ENCODE measurements at regions of chr20 and their contacts with region 1.

Region 1: GRCh38 chr20:58650776-58651558 is at the start of gene STX16:
- DNase-seq: peak; percentile 76 to 95 (median 86)
- ATAC-seq: peak; percentile 66
- H3K4me3 ChIP-seq: peak within 1 kb of the TSS; percentile 74
- H3K4me3 Mint-ChIP-seq: peak within 1 kb of the TSS; percentile 99
- H3K27ac ChIP-seq: peak within 1 kb of the TSS; percentile 91 to 93
- H3K27ac Mint-ChIP-seq: peak within 1 kb of the TSS; percentile 100
- H3K4me1 ChIP-seq: peaks cover 37% of the 10 kb centered on the region
- H3K4me1 Mint-ChIP-seq: peaks cover 28% of the 10 kb centered on the region
- H3K27me3 ChIP-seq: no peaks in the 10 kb centered on the region
- H3K27me3 Mint-ChIP-seq: no peaks in the 10 kb centered on the region
- CTCF ChIP-seq: peak; percentile 76
- total RNA-seq, gene STX16: 179 to 181 TPM

Region 2: GRCh38 chr20:57718490-57719271 is 932.3 kb before region 1 on chr20:
- CTCF ChIA-PET with region 1: no interaction called
- POLR2A ChIA-PET with region 1: no interaction called
- intact Hi-C with region 1: loop called (anchors 5 kb)
- DNase-seq: peak; percentile 74 to 97 (median 86)
- ATAC-seq: peak; percentile 97
- H3K4me3 ChIP-seq: peak overlapping the region; percentile 52
- H3K4me3 Mint-ChIP-seq: peak overlapping the region; percentile 69
- H3K27ac ChIP-seq: no peak overlapping the region
- H3K27ac Mint-ChIP-seq: peak overlapping the region; percentile 75
- H3K4me1 ChIP-seq: peaks cover 13% of the 10 kb centered on the region
- H3K4me1 Mint-ChIP-seq: peaks cover 16% of the 10 kb centered on the region
- H3K27me3 ChIP-seq: peaks cover 0 to 2% of the 10 kb centered on the region in 2 experiments
- H3K27me3 Mint-ChIP-seq: no peaks in the 10 kb centered on the region
- CTCF ChIP-seq: no peak

Region 3: GRCh38 chr20:58407966-58408557 is 242.9 kb before region 1 on chr20:
- CTCF ChIA-PET with region 1: no interaction called
- POLR2A ChIA-PET with region 1: no interaction called
- intact Hi-C with region 1: loop called in 1 of 2 experiments (anchors 5 kb)
- DNase-seq: peak in 5 of 14 experiments; percentile 22 to 46 (median 40)
- ATAC-seq: peak; percentile 77
- H3K4me3 ChIP-seq: no peak overlapping the region
- H3K4me3 Mint-ChIP-seq: peak overlapping the region; percentile 79
- H3K27ac ChIP-seq: peak overlapping the region; percentile 32 to 65
- H3K27ac Mint-ChIP-seq: peak overlapping the region; percentile 88
- H3K4me1 ChIP-seq: peaks cover 18% of the 10 kb centered on the region
- H3K4me1 Mint-ChIP-seq: peaks cover 38% of the 10 kb centered on the region
- H3K27me3 ChIP-seq: no peaks in the 10 kb centered on the region
- H3K27me3 Mint-ChIP-seq: no peaks in the 10 kb centered on the region
- CTCF ChIP-seq: no peak

Region 4: DNA sequence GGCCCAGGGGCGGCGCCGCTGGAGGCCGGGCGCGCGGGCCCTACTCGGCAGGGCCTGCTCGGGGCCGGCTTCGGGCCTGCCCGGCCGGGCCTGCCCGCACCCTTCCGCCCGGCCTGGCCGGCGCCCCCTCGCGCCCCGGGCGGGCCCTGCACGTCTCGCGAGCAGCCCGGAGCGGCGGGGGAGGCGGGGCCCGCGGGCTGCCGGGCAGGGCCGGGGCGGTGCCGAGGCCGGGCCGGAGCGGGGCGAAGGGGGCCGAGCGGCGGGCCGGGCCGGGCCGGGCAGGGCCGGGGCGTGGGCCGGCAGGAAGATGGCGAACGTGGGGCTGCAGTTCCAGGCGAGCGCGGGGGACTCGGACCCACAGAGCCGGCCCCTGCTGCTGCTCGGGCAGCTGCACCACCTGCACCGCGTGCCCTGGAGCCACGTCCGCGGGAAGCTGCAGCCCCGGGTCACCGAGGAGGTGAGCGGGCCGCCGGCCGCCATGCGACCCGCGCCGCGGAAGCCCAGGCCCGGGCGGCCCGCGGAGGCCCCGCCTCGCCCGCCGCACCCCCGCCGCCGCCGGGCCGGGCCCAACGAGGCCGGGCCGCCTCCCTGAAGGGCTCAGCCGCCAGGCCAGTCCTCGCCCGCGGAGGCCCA is 41.7 kb after region 1 on chr20 and contains the start of gene NPEPL1:
- CTCF ChIA-PET with region 1: interaction called, 29 read pairs
- POLR2A ChIA-PET with region 1: interaction called, 51 read pairs
- intact Hi-C with region 1: loop called (anchors 1 to 2 kb)
- DNase-seq: peak in 12 of 14 experiments; percentile 22 to 87 (median 64)
- ATAC-seq: peak; percentile 95
- H3K4me3 ChIP-seq: peak within 1 kb of the TSS; percentile 50
- H3K4me3 Mint-ChIP-seq: peak within 1 kb of the TSS; percentile 83
- H3K27ac ChIP-seq: peak within 1 kb of the TSS; percentile 10 to 65
- H3K27ac Mint-ChIP-seq: peak within 1 kb of the TSS; percentile 81
- H3K4me1 ChIP-seq: peaks cover 23% of the 10 kb centered on the region
- H3K4me1 Mint-ChIP-seq: peaks cover 11% of the 10 kb centered on the region
- H3K27me3 ChIP-seq: no peaks in the 10 kb centered on the region
- H3K27me3 Mint-ChIP-seq: no peaks in the 10 kb centered on the region
- CTCF ChIP-seq: no peak
- total RNA-seq, gene NPEPL1: 58.3 to 61.1 TPM

Region 5: DNA sequence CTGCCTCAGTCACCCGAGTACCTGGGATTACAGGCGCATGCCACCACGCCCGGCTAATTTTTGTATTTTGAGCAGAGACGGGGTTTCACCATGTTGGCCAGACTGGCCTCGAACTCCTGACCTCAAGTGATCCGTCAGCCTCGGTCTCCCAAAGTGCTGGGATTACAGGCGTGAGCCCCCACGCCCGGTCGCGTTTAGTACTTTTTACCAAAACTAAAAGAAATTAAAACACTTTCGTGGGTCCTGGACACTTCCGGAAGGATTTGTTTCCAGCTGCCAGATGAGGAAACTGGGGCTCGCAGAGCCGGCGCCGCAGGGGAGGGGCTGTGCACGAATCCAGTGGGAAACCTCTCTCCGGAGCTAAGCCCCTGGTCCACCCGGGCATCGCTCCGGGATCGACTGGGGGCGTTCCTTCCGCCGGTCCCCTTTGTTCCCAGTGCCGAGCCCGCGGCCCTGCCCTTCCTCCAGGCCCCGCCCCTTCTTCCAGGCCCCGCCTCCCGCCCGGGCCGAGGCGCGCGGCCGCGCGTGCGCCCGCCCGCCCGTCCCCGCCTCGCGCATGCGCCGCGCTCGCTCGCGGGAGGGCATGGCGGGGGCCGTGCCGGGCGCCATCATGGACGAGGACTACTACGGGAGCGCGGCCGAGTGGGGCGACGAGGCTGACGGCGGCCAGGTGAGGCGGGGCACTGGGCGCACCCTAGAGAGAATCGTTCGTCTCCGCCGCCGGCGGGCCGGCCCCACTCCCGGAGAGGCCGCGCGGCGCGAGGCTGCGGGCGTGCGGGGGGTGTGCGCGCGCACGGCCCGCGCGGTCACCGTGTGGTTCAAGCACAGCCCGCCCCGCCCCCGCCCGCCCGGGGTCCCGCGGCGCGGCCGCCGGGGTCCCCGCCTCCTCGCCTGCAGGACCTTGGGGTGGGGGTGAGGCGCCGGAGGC is 330.0 kb after region 1 on chr20 and contains the start of gene NELFCD:
- CTCF ChIA-PET with region 1: interaction called, 4 read pairs
- POLR2A ChIA-PET with region 1: interaction called, 4 read pairs
- intact Hi-C with region 1: loop called in 1 of 2 experiments (anchors 5 kb)
- DNase-seq: peak; percentile 79 to 95 (median 88)
- ATAC-seq: peak; percentile 92
- H3K4me3 ChIP-seq: peak within 1 kb of the TSS; percentile 82
- H3K4me3 Mint-ChIP-seq: peak within 1 kb of the TSS; percentile 92
- H3K27ac ChIP-seq: peak within 1 kb of the TSS; percentile 41 to 52
- H3K27ac Mint-ChIP-seq: peak within 1 kb of the TSS; percentile 87
- H3K4me1 ChIP-seq: peaks cover 42% of the 10 kb centered on the region
- H3K4me1 Mint-ChIP-seq: peaks cover 43% of the 10 kb centered on the region
- H3K27me3 ChIP-seq: no peaks in the 10 kb centered on the region
- H3K27me3 Mint-ChIP-seq: no peaks in the 10 kb centered on the region
- CTCF ChIP-seq: no peak
- total RNA-seq, gene NELFCD: 95.7 to 97.0 TPM

Region 6: DNA sequence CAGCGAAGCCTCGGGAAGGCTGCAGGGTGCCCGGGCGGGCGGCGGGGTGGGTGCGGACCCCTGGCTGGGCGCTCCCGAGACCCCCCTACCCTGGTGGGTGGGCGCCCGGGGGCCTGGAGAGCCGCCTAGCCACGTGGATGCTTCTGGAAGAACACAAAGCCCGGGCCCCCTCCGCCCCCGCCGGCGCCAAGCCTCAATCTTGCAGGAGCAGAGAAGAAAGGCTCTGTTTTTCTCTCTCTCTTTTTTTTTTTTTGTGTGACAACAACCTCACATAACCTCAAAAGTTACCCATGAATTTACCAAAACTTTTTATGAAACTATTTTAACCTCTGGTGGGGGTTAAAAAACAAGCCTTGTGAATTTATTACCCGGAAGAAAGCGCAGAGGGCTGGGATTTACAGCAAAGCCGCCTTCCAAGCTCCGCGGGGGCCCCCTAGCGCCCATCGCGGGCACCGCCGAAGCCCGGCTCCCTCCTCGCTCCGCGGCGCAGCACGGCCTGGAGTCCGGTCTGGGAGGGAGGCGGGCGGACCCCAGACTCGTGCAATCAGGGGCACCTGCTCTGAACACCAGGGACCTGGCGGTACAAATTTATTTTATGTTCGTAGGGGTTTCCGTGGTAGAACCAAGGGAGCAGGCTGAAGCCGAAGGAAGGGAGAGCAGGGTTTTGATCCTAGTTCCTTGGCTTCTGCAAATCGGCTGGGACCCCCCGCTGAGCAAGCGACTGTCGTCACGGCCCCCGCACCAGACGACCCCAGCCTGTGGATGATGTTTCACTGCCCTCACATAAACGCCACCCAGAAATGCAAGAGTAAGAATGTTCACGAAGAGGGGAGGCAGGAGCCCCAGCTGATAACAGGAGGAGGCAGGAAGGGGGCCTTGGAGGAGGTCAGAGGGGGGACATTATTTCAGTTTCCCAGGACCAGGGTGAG is 571.5 kb after region 1 on chr20:
- CTCF ChIA-PET with region 1: no interaction called
- POLR2A ChIA-PET with region 1: no interaction called
- intact Hi-C with region 1: loop called (anchors 5 kb)
- DNase-seq: peak; percentile 72 to 87 (median 78)
- ATAC-seq: peak; percentile 94
- H3K4me3 ChIP-seq: peak overlapping the region; percentile 46
- H3K4me3 Mint-ChIP-seq: peak overlapping the region; percentile 86
- H3K27ac ChIP-seq: no peak overlapping the region
- H3K27ac Mint-ChIP-seq: peak overlapping the region; percentile 87
- H3K4me1 ChIP-seq: peaks cover 16% of the 10 kb centered on the region
- H3K4me1 Mint-ChIP-seq: peaks cover 51% of the 10 kb centered on the region
- H3K27me3 ChIP-seq: no peaks in the 10 kb centered on the region
- H3K27me3 Mint-ChIP-seq: no peaks in the 10 kb centered on the region
- CTCF ChIP-seq: peak; percentile 93

Measured in CD4-positive, alpha-beta T cell (primary cell).